GM18951 (cell line): ENCODE measurements at regions of chr11 and their contacts with region 1.

Region 1: GRCh38 chr11:34492806-34493414 is 20.7 kb downstream of the ELF5 start:
- POLR2A ChIP-seq: no peak

Region 2: GRCh38 chr11:33857933-33858371 is 635.0 kb before region 1 on chr11:
- in situ Hi-C with region 1: loop called (anchors 25 kb)
- POLR2A ChIP-seq: no peak

Region 3: DNA sequence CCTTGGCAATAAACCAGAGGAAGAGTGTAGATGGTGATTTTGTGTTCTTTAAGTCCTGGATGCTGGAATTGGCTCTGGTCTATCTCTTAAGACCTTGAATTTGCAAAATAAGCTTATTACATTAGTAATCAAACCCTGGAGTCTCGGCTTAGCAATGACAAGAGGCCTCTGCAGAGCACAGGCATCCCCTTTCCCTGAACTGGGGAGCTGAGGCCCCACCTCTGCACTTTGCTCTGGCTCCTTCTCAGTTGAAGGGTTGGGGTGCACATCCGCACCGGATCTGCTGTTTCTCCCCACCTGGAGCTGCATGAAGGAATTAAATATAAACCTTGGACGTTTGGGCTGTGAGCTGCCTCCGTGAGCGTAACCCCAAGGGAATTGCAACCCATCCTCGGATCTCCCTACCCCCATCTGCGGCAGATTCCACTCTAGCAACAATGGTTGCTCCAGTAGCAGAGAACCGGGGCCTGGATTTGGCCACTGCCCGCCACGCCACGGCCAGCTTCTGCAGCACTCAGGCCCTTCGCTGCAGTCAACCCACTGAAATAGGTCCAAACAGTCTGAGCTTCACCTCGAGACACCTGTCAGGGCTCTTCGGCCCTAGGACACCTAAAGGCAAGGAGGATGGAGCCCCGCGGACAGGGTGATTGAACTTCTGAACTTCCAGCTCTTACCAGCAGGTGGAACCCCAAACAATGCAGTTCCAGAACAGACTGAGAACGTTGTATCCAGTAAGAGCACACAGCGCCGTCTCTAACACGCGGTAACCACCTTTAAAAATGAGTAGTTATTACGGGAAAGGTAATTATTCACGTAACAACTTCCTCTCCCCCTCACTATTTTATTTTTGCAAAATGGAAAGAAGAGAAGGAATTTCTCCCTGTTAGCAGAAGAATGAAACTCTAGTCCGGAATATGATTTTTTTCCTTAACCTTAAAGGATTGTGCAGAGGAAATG is 496.1 kb before region 1 on chr11:
- in situ Hi-C with region 1: loop called (anchors 10 kb)
- POLR2A ChIP-seq: no peak

Region 4: GRCh38 chr11:34174412-34175041 is 318.4 kb before region 1 on chr11:
- in situ Hi-C with region 1: loop called (anchors 25 kb)
- POLR2A ChIP-seq: no peak

Region 5: GRCh38 chr11:34366522-34366921 is 126.4 kb before region 1 on chr11:
- in situ Hi-C with region 1: loop called (anchors 10 kb)
- POLR2A ChIP-seq: no peak

Region 6: DNA sequence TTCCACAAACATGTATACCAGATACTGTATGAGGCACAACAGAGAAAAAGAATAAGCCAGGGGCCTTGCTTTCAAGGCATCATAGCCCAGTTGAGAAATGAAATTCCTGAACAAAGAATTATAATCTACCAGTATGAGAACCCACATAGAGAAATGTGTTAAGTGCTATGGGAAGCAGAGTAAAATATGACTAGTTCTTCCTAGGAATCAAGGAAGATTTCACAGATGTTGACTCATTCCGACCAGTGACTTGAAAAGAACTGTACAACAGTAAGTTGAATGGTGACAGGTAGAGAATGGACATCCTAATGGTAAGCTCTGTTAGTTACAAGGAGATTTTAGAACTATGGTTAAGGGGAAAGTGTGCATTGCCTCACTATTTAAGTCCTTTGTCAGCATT is 1272.3 kb after region 1 on chr11:
- in situ Hi-C with region 1: no loop called
- POLR2A ChIP-seq: no peak